ENCODE measurements at regions of chr19 and their contacts with region 1.

Region 1: GRCh38 chr19:8158411-8159074 is 9.2 kb upstream of the FBN3 start:
- DNase-seq: peak; percentile 71 to 87 (median 80)
- H3K4me3 ChIP-seq: no peak overlapping the region
- H3K4me3 Mint-ChIP-seq: peak overlapping the region in 1 of 2 donors; percentile 64
- H3K27ac ChIP-seq: no peak overlapping the region
- H3K27ac Mint-ChIP-seq: peak overlapping the region in 1 of 7 donors; percentile 49
- H3K4me1 ChIP-seq: no peaks in the 10 kb centered on the region
- H3K4me1 Mint-ChIP-seq: peaks cover 9% of the 10 kb centered on the region
- H3K27me3 ChIP-seq: peaks cover 2 to 4% of the 10 kb centered on the region in 2 donors
- H3K27me3 Mint-ChIP-seq: peaks cover 20 to 39% (median 25%) of the 10 kb centered on the region in 3 donors
- CTCF ChIP-seq: peak; percentile 79

Region 2: DNA sequence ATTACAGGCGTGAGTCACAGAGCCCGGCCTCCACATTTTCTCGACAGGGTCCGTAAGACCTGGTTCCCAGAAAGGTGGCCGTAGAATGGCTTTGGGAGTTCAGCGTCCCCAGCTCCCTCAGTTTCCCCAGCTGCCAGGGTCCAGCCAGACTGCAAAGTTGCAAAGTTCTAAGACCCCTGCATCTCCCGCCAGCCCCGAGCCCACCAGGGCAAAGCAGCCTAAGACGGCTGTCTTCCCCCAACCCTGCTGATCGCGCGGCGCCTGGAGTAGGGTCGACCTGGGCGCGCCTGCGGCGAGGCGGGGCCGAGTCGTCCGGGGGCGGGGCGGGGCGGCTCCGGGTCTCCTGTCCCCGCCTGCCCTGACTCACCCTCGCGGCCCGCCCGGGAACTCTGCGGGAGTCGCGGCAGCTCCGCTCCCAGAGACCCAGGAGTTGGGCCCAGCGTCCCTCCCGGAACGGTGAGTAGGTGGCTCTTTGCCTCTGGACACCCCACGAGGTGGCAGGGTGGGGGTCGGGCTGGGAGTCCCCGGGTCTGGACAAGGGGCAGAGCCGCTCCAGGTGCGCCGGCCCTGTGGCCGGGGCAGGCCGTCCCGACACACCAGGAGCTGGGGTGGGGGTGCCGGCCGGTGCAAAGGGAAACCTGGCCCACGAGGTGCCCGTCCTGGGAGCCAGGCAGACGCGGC is 270.3 kb before region 1 on chr19 and contains the start of gene LRRC8E:
- intact Hi-C with region 1: no loop called
- DNase-seq: peak in 2 of 3 donors; percentile 16 to 54
- H3K4me3 ChIP-seq: peak within 1 kb of the TSS in 1 of 3 experiments; percentile 16
- H3K4me3 Mint-ChIP-seq: peak within 1 kb of the TSS in 1 of 2 donors; percentile 81
- H3K27ac ChIP-seq: no peak within 1 kb of the TSS
- H3K27ac Mint-ChIP-seq: peak within 1 kb of the TSS in 1 of 7 donors; percentile 50
- H3K4me1 ChIP-seq: peaks cover 2 to 7% of the 10 kb centered on the region in 2 donors
- H3K4me1 Mint-ChIP-seq: peaks cover 7% of the 10 kb centered on the region
- H3K27me3 ChIP-seq: peaks cover 8 to 26% of the 10 kb centered on the region in 2 donors
- H3K27me3 Mint-ChIP-seq: peaks cover 43 to 64% (median 60%) of the 10 kb centered on the region in 3 donors
- CTCF ChIP-seq: no peak
- polyA plus RNA-seq, gene LRRC8E: not detected

Region 3: GRCh38 chr19:7968796-7969554 is 189.6 kb before region 1 on chr19:
- intact Hi-C with region 1: loop called in 1 of 2 experiments (anchors 10 kb)
- DNase-seq: no peak
- H3K4me3 ChIP-seq: no peak overlapping the region
- H3K4me3 Mint-ChIP-seq: no peak overlapping the region
- H3K27ac ChIP-seq: no peak overlapping the region
- H3K27ac Mint-ChIP-seq: no peak overlapping the region
- H3K4me1 ChIP-seq: no peaks in the 10 kb centered on the region
- H3K4me1 Mint-ChIP-seq: no peaks in the 10 kb centered on the region
- H3K27me3 ChIP-seq: no peaks in the 10 kb centered on the region
- H3K27me3 Mint-ChIP-seq: no peaks in the 10 kb centered on the region
- CTCF ChIP-seq: no peak

Region 4: DNA sequence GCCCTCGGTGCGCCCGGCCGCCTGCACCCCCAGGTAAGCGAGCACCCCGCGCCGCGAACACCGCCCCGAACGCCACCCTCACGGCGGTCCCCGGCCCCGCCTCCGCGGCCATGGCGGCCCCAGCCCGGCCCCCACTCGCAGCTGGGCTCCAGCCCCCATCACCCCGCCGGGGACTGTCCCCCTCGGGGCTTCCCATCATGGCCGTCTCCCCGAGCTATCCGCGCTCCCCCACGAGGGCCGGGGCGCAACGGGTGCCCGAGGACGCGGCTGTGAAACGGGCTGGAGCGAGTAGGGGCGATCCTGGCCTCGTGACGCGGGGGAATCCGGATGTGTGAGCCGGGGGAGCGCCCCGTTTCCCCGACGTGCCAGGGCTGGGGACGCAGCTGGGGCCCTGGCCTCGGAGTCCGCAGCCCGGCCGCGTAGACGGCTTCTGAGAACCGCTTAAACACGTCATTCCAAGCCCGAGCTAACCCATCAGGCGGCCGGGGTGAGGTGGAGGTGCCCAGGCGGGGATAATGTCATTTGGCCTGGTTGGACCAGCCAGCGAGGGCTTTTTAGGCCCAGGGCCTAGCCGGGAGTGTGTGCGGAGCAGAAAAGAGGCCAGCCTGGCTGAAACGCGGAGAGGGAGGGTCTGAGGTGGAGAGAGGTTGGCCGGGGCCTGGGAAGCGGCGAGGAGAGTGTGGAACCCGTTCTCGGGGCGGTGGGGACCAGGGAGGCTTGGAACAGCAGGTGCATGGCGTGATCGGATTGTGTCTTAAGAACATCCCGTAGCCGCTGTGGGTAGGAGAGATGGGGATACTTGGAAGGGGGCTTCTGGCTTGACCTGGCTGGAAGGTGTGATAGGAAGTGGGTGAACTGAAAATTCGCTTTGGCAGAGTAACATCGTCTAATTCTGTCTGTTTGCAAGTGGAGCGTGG is 51.2 kb after region 1 on chr19:
- intact Hi-C with region 1: loop called in 1 of 2 experiments (anchors 5 kb)
- DNase-seq: peak in 1 of 3 donors; percentile 48
- H3K4me3 ChIP-seq: peak overlapping the region; percentile 31 to 72 (median 45)
- H3K4me3 Mint-ChIP-seq: peak overlapping the region; percentile 73 to 90
- H3K27ac ChIP-seq: no peak overlapping the region
- H3K27ac Mint-ChIP-seq: peak overlapping the region in 5 of 7 donors; percentile 54 to 85 (median 63)
- H3K4me1 ChIP-seq: peaks cover 16 to 22% of the 10 kb centered on the region in 2 donors
- H3K4me1 Mint-ChIP-seq: peaks cover 28% of the 10 kb centered on the region
- H3K27me3 ChIP-seq: peaks cover 6 to 49% of the 10 kb centered on the region in 2 donors
- H3K27me3 Mint-ChIP-seq: peaks cover 53 to 74% (median 68%) of the 10 kb centered on the region in 3 donors
- CTCF ChIP-seq: no peak

Region 5: GRCh38 chr19:8252922-8253589 is 94.5 kb after region 1 on chr19:
- intact Hi-C with region 1: loop called (anchors 1 kb)
- DNase-seq: peak; percentile 67 to 73 (median 68)
- H3K4me3 ChIP-seq: no peak overlapping the region
- H3K4me3 Mint-ChIP-seq: no peak overlapping the region
- H3K27ac ChIP-seq: no peak overlapping the region
- H3K27ac Mint-ChIP-seq: no peak overlapping the region
- H3K4me1 ChIP-seq: no peaks in the 10 kb centered on the region
- H3K4me1 Mint-ChIP-seq: no peaks in the 10 kb centered on the region
- H3K27me3 ChIP-seq: no peaks in the 10 kb centered on the region
- H3K27me3 Mint-ChIP-seq: peaks cover 13 to 21% (median 15%) of the 10 kb centered on the region in 3 donors
- CTCF ChIP-seq: peak; percentile 98

Measured in CD14-positive monocyte (primary cell).